Aorta (tissue), 5 donors: ENCODE measurements at regions of chr17 and their contacts with region 1.

Region 1: DNA sequence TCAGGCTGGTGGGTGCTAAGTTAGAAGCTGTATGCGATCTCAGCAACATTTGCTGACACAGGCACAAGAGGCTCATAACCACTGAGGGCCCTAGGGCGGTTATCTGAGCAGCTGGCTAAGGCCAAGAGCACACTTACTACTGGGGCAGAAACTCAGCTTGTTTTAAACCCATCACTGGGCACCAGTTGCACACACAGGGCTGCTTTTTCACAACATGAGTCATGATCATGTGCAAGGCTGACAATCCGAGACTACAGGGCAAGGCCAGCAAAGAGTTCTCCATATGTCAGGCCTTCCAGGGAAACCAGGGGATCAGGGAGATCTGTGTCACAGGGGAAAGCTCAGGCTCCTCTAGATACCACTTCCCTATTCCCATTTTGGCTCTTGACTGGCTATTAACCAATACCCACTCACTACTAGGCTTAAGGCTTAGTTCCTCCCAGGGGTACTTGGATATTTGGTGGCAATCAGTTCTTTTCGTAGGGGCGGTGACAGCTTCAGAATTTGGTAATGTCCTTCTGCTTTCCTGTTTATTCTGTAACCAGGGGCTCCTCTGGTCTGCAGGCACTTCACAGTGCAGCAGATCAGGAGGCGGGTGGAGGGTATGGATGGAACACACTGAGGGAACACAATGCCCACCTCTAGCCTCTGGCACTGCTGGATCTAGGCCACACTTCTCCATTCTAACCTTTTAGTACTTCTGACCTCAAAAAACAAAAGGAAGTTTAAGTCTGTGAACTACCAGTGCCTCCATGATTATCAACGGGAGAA is 44.9 kb upstream of the ERN1 start:
- DNase-seq: peak in 1 of 2 donors; percentile 67
- ATAC-seq: peak; percentile 46
- H3K4me3 ChIP-seq: no peak overlapping the region
- H3K27ac ChIP-seq: peak overlapping the region in 1 of 2 donors; percentile 61
- H3K4me1 ChIP-seq: peaks cover 0 to 3% of the 10 kb centered on the region in 2 donors
- H3K27me3 ChIP-seq: no peaks in the 10 kb centered on the region

Region 2: GRCh38 chr17:64262417-64263260 is 87.8 kb after region 1 on chr17 and contains the start of gene TEX2:
- intact Hi-C with region 1: loop called (anchors 5 to 10 kb)
- DNase-seq: peak; percentile 69 to 85
- ATAC-seq: peak; percentile 67
- H3K4me3 ChIP-seq: peak within 1 kb of the TSS; percentile 82 to 92
- H3K27ac ChIP-seq: peak within 1 kb of the TSS in 1 of 2 donors; percentile 76
- H3K4me1 ChIP-seq: peaks cover 0 to 3% of the 10 kb centered on the region in 2 donors
- H3K27me3 ChIP-seq: no peaks in the 10 kb centered on the region
- total RNA-seq, gene TEX2: 26.6 to 29.4 TPM